GM10248 (cell line): ENCODE measurements at regions of chr3 and their contacts with region 1.

Region 1: DNA sequence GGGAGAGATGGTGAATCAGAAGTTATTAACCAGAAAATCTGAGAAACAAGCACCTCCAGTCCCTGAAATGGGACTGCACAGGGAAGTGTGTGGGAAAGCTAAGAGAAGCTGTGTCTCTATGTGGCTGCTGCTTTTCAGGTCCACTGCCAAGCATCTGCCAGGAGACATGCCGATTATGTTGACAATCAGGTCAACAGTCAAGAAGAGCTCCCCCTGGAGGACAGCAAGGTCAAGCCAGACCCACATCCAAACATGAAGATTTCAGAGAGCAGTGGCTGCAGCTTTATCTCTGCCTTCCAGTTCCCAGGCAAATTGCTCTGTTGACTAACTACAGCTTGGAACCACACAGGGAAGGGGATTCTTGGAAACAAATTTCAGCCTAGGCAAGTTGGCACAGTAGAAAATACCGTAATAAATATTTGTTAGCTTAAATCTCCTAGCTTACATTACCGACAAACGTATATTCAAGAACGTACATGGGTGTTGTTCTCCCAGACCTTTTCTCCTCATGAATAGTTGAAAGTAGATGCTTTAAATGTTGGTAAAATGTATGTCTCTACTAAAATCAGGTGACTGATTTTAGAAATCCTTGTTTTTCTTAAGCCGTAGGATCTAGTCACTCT is 394.5 kb upstream of the RARB start:
- DNase-seq: peak; percentile 37
- CTCF ChIP-seq: peak; percentile 39

Region 2: DNA sequence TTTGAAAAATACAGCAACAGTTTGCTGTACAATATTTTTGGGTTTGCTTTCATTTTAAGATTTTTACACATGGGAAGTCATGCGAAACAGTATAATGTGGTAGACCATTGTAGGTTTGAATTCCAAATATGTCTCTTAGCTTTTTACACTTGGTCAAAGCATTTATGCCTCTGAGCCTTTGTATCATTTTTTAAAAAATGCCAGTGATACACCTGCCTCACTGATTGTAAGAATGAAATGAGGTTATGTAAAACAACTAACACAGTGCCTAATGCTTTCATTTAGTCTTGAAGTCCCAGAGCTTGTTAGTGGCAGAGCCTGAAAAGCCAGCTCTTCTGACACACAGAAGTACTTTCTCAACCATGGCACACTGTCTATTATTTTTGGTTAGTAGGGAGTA is 1628.4 kb before region 1 on chr3:
- CTCF ChIA-PET with region 1: no interaction called
- POLR2A ChIA-PET with region 1: no interaction called
- DNase-seq: peak; percentile 19
- CTCF ChIP-seq: no peak

Region 3: DNA sequence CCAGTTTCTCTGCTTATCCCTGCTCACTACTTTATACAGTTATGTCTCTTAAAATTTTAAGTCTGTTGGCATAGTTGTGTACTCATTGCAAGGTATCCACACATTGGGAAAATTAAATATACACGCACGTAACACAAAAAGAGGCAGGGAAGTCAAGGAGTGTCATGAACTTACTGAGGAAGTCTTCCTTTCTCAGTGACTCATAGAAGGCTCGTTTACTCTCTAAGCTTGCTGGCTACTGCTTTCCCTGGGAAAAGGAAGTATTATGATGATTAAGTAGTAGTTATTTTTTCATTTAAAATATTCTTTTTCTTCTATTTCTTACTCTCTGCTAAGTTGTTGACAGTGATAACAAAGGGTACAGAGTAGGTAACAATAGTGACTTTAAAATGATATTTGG is 1543.1 kb before region 1 on chr3:
- CTCF ChIA-PET with region 1: no interaction called
- POLR2A ChIA-PET with region 1: no interaction called
- DNase-seq: no peak
- CTCF ChIP-seq: no peak

Region 4: GRCh38 chr3:24773798-24774197 is 259.7 kb before region 1 on chr3:
- CTCF ChIA-PET with region 1: interaction called, 12 read pairs
- POLR2A ChIA-PET with region 1: no interaction called
- DNase-seq: peak; percentile 22
- CTCF ChIP-seq: peak; percentile 73

Region 5: DNA sequence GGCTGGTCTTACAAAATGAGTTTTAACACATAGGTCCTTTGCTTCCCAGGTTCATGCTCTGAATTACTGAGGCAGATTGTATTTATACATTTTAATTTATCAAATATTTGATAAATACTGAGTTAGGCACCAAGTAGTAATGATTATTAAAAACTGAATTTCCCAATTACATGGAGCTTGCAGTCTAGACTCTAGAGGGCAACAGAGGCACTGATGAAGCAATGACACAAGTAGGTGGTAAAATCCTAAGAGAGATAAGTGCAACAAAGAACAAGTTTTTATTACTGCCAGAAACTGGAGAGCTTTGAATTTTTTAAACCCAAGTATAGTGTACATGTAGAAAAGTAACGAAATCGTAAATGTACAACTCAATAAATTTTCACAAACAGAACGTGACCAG is 11.7 kb before region 1 on chr3:
- CTCF ChIA-PET with region 1: interaction called, 35 read pairs
- POLR2A ChIA-PET with region 1: no interaction called
- DNase-seq: no peak
- CTCF ChIP-seq: peak; percentile 28

Region 6: GRCh38 chr3:25056036-25056755 is 22.7 kb after region 1 on chr3:
- CTCF ChIA-PET with region 1: interaction called, 11 read pairs
- POLR2A ChIA-PET with region 1: no interaction called
- DNase-seq: no peak
- CTCF ChIP-seq: no peak